H1 (cell line): ENCODE measurements at regions of chr15 and their contacts with region 1.

Region 1: DNA sequence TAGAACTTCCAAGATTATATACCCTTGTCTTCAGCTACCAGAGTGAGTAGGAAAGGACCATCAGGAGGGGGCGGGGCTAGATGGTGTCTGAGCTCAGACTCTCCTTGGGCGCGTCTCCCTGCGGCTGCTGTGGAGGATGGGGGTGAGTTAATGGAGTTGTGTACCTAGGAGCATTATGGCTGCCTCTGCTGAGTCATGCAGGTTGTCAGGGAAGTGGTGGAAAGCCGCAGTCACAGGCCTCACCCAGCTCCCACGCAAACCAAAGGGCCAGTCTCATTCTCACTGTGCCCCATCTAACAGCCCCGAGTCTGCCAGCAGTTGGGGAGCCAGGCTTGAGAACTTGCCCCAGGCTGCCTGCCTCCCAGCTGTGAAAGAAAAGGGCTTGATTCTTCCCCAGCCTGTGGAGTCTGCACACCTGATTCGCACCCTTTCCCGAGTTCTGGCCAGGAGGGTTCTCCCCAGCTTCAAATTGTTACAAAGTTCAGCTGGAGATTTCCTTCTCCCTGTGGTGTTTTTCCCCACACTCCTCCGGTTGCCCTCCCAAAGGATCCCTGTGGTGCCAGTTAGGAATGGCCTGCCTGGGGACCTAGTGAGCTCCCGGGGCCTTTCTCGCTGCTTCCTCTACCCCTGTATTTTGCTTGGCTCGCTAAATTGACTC is 143.3 kb downstream of the HCN4 start:
- DNase-seq: peak in 1 of 2 experiments; percentile 51
- H3K4me3 ChIP-seq: no peak overlapping the region
- H3K27ac ChIP-seq: peak overlapping the region; percentile 13; the same call in 1 of the 2 replicates
- H3K4me1 ChIP-seq: peaks cover 0 to 6% (median 2%) of the 10 kb centered on the region in 4 experiments; a peak in 3 of 7 replicates
- H3K27me3 ChIP-seq: no peaks in the 10 kb centered on the region
- CTCF ChIP-seq: no peak
- EP300 ChIP-seq: no peak
- POLR2A ChIP-seq: no peak
- RAD21 ChIP-seq: no peak

Region 2: DNA sequence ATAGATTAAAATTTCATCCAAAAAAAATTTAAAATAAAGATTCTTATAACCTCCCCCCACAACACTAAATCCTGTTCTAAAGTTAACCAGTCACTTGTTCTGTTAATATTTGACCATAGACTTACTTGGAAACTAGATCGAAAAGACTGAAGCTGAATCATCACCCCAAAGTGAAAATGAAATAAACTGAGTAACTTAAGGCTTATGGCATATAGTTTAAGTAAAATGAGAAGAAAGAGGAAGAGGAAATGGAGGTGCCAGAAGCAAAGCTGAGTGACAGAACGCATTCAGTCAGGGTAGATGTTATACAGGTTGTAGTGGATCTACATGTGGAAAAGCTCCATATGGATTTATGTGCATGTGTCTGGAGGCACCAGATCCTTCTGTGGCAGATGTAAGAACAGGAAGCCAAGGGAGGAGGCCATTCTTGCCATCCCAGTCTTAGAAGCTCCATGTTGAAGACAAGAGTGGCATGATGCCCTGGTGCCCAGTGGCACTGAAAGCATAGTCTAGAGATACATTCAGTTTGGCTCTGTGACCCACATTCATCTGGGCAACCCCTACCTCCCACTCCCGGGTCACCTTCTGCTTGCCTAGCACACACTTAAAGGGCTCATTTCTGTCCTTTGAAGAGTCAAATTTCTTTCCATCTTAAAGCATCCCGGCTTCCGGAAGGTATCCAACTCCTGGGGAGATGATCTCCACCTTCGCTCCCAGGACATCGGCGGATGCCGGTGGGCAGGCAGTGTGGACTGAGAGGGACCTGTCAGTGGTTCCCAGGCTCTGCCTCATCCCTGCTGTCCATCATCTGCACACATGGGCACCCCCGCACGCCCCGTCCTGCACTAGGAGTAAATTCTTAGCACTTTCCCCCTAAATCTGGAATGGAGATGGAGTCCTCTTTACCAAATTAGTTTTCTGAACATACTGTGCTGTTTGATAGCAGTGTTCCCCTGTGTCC is 82.4 kb before region 1 on chr15:
- CTCF ChIA-PET with region 1: no interaction called
- POLR2A ChIA-PET with region 1: no interaction called
- DNase-seq: no peak
- H3K4me3 ChIP-seq: no peak overlapping the region
- H3K27ac ChIP-seq: no peak overlapping the region
- H3K4me1 ChIP-seq: no peaks in the 10 kb centered on the region
- H3K27me3 ChIP-seq: no peaks in the 10 kb centered on the region
- CTCF ChIP-seq: no peak
- EP300 ChIP-seq: no peak
- POLR2A ChIP-seq: no peak
- RAD21 ChIP-seq: no peak

Region 3: GRCh38 chr15:73240866-73241499 is 15.5 kb after region 1 on chr15:
- CTCF ChIA-PET with region 1: interaction called, 11 read pairs
- POLR2A ChIA-PET with region 1: interaction called, 3 read pairs
- DNase-seq: peak in 1 of 2 experiments; percentile 89
- H3K4me3 ChIP-seq: no peak overlapping the region
- H3K27ac ChIP-seq: no peak overlapping the region
- H3K4me1 ChIP-seq: no peaks in the 10 kb centered on the region
- H3K27me3 ChIP-seq: no peaks in the 10 kb centered on the region
- CTCF ChIP-seq: peak in 2 of 3 experiments; percentile 81 to 87; a peak in 3 of 4 replicates
- EP300 ChIP-seq: no peak
- POLR2A ChIP-seq: no peak
- RAD21 ChIP-seq: peak; percentile 66 to 74